ENCODE measurements at regions of chr1 and their contacts with region 1.

Region 1: DNA sequence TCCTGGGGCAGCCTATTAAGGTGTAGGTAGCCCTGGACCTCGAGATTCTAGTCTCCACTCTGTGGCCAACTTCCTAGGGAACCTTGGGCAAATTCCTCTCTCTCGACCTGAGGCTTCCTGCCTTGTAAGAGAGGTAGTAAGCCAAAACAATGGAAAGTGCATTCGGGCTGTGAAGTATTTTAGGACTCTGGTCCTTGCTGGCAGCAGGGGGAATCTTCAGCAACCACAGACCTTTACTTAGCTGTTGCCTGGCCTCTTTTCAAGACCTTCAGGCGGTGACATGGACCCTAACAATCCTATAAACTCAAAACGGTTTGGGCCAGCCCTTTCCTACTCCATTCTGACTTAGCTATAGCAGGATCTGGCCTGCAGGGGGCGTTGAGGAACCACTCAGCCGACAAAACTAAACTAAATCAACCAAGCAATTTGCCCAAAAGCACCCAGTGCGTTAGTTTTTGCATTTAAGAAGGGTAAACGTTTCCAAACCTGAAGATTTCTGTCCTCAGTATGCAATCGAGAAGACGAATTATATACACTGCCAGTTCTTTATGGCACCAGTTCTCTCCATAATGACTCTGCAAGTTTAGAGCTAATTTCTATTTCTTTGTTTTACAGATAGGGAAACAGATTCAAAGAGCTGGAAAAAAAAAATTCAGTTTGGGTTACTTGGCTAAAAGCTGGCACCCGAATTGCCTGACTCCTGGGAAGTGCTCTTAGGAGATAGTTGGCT is 10.9 kb upstream of the SESN2 start:
- DNase-seq: peak; percentile 91
- H3K4me3 ChIP-seq: peak overlapping the region in 1 of 4 donors; percentile 14
- H3K27ac ChIP-seq: peak overlapping the region; percentile 84 to 89 (median 86)
- H3K4me1 ChIP-seq: peaks cover 0 to 32% (median 23%) of the 10 kb centered on the region in 4 donors
- H3K27me3 ChIP-seq: no peaks in the 10 kb centered on the region
- CTCF ChIP-seq: peak; percentile 82 to 90 (median 87)
- EP300 ChIP-seq: no peak
- POLR2A ChIP-seq: no peak

Region 2: DNA sequence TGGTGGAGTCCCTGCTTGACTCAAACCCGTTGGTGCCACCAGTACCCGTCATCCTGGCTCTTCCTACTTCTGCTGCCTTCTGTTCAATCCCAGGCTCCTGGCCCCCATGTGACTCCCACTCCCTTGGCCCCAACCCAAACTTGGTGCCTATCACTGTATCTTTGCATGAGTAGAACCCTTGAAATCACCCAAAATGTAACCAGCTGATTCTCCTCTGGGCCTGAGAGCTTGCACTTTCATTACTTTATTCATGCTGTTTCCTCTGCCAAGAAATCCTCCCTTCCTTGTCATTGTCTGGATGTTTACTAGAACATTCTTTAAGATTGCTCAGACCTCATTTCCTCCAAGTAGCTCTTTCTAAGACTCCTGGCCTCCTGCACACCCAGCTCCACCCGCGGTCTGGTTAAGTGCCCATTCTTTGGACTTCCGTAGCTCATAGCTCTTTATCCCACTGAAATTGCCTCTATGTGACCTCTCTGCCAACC is 87.6 kb before region 1 on chr1:
- intact Hi-C with region 1: no loop called
- DNase-seq: no peak
- H3K4me3 ChIP-seq: no peak overlapping the region
- H3K27ac ChIP-seq: peak overlapping the region in 2 of 4 donors; percentile 53 to 59
- H3K4me1 ChIP-seq: peaks cover 0 to 18% (median 11%) of the 10 kb centered on the region in 4 donors
- H3K27me3 ChIP-seq: no peaks in the 10 kb centered on the region
- CTCF ChIP-seq: no peak
- EP300 ChIP-seq: no peak
- POLR2A ChIP-seq: no peak

Region 3: DNA sequence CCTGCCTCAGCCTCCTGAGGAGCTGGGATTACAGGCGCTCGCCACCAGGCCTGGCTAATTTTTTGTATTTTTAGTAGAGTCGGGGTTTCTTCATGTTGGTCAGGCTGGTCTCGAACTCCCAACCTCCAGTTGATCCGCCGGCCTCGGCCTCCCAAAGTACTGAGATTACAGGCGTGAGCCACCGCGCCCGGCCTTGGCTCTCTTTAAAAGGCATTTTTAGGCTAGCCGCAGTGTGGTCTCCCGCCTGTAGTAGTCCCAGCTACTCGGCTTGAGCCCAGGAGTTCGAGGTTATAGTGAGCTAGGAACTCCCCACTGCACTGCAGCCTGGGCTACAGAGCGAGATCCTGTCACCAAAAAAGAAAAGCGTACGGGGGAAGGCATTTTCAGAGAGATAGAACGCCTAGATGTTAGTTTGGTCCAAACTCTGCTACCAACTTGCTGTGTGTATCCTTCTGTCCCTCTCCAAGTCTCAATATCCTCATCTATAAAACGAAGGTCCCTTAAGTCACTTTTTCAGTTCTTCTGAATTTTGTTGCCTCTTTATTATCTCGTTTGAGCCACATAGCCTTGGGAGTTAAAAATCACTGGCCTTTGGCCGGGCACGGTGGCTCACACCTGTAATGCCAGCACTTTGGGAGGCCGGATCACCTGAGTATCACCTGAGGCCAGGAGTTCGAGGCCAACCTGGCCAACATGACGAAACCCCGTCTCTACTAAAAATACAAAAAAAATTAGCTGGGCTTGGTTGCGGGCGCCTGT is 81.1 kb after region 1 on chr1:
- intact Hi-C with region 1: loop called (anchors 5 kb)
- DNase-seq: peak; percentile 21
- H3K4me3 ChIP-seq: peak overlapping the region; percentile 58 to 67 (median 66)
- H3K27ac ChIP-seq: peak overlapping the region; percentile 77 to 90 (median 85)
- H3K4me1 ChIP-seq: peaks cover 0 to 19% (median 8%) of the 10 kb centered on the region in 4 donors
- H3K27me3 ChIP-seq: no peaks in the 10 kb centered on the region
- CTCF ChIP-seq: peak in 2 of 4 experiments; percentile 21 to 22
- EP300 ChIP-seq: no peak
- POLR2A ChIP-seq: no peak

Region 4: GRCh38 chr1:28369371-28370238 is 121.2 kb after region 1 on chr1 and contains the start of gene PHACTR4:
- intact Hi-C with region 1: loop called (anchors 5 kb)
- DNase-seq: peak; percentile 96
- H3K4me3 ChIP-seq: peak within 1 kb of the TSS; percentile 74 to 86 (median 77)
- H3K27ac ChIP-seq: peak within 1 kb of the TSS; percentile 94 to 97 (median 95)
- H3K4me1 ChIP-seq: peaks cover 0 to 38% (median 20%) of the 10 kb centered on the region in 4 donors
- H3K27me3 ChIP-seq: no peaks in the 10 kb centered on the region
- CTCF ChIP-seq: peak in 1 of 4 experiments; percentile 10
- EP300 ChIP-seq: peak in 1 of 4 donors; percentile 5
- POLR2A ChIP-seq: peak; percentile 77 to 85
- total RNA-seq, gene PHACTR4: 35.2 to 57.4 (median 38.4) TPM

Region 5: GRCh38 chr1:28518000-28518744 is 269.7 kb after region 1 on chr1:
- intact Hi-C with region 1: loop called (anchors 5 kb)
- DNase-seq: peak; percentile 95
- H3K4me3 ChIP-seq: peak overlapping the region; percentile 51 to 72 (median 67)
- H3K27ac ChIP-seq: peak overlapping the region; percentile 84 to 89 (median 88)
- H3K4me1 ChIP-seq: peaks cover 0 to 17% (median 15%) of the 10 kb centered on the region in 4 donors
- H3K27me3 ChIP-seq: no peaks in the 10 kb centered on the region
- CTCF ChIP-seq: peak; percentile 97 to 98 (median 97)
- EP300 ChIP-seq: no peak
- POLR2A ChIP-seq: no peak

Region 6: DNA sequence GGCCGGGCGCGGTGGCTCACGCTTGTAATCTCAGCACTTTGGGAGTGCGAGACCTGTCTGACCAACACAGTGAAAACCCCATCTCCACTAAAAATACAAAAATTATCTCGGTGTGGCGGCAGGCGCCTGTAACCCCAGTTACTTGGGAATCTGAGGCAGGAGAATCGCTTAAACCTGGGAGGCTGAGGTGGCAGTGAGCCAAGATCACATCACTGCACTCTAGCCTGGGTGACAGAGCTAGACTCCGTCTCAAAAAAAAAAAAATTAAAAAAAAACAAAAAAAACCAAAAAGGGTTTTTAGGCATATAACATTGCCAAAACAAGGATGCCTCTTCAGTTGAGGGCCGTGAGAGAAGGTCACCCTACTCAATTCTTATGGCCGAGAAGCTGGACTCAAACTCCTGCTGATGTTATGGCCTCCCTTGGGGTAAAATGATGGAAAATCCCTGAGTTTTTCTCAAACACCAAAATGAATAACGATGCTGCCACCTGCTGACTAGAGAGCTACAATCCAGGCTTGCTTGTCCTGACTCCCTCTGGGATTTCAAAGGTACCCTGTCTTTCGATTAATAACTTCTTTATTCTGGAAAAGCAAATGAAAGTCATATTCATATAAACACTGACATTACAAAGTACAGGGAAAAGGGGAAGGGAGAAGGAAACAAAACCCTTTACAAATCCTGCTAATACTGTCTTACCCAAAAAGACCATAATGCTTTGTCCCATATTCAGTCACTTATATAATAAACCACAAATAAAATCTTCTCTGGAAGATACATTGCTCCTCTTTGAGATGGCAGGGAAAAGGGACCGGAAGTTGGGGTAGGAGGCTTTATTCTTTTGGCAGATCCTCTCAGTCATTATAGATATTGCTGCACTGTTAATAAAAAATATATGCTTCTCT is 354.3 kb after region 1 on chr1:
- intact Hi-C with region 1: loop called (anchors 10 kb)
- DNase-seq: peak; percentile 75
- H3K4me3 ChIP-seq: no peak overlapping the region
- H3K27ac ChIP-seq: peak overlapping the region in 1 of 4 donors; percentile 41
- H3K4me1 ChIP-seq: peaks cover 0 to 8% (median 0%) of the 10 kb centered on the region in 4 donors
- H3K27me3 ChIP-seq: no peaks in the 10 kb centered on the region
- CTCF ChIP-seq: peak; percentile 14 to 54 (median 49)
- EP300 ChIP-seq: no peak
- POLR2A ChIP-seq: no peak

Region 7: GRCh38 chr1:28736450-28737306 is 488.2 kb after region 1 on chr1 and contains the start of gene YTHDF2:
- intact Hi-C with region 1: loop called (anchors 10 kb)
- DNase-seq: peak; percentile 98
- H3K4me3 ChIP-seq: peak within 1 kb of the TSS; percentile 85 to 97 (median 92)
- H3K27ac ChIP-seq: peak within 1 kb of the TSS; percentile 96 to 97 (median 96)
- H3K4me1 ChIP-seq: peaks cover 0 to 50% (median 43%) of the 10 kb centered on the region in 4 donors
- H3K27me3 ChIP-seq: no peaks in the 10 kb centered on the region
- CTCF ChIP-seq: peak; percentile 85 to 96 (median 90)
- EP300 ChIP-seq: no peak
- POLR2A ChIP-seq: peak; percentile 86 to 87
- total RNA-seq, gene YTHDF2: 37.9 to 47.0 (median 42.7) TPM

Measured in sigmoid colon (tissue), 7 donors.